ENCODE measurements at regions of chr9 and their contacts with region 1.

Region 1: DNA sequence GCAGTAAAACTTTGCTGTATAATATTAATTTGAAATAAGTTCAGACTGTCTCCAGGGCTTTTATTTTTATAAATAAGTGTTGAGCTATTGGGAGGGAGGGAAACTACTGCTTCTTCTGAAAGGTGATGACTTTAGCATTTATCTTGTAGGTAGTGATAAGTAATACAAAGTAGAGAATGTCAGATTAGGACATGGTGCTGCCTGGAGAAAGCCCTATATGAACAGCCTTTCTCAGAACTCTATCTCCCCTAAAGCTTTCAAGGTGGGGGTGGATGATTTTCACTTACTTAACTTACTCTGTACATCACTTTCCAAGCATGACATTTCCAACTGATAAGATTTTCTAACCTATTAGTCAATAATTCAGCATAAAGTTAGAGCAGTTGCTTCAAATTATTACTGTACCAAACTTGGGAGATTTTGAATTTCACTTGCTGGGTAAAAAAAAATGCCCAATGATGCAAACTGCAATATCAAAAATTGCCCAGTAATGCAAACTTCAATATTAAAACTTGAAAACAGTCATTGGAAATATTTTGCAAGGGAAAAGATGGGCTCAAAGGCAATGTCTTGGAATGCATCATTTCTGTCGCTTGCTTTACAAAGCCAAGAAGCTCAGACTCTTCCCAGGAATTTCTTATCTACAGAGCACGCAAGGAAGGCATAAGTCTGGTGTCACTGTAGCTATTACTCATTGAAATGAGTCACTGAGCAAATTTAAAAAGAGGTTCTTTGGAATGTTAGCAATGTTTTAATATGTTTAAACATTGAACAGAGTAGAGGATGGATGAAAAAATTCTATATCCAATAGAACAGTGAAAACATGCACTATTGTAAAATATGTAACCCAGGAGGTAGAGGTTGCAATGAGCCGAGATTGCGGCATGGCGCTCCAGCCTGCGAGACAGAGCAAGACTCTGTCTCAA is 569.5 kb downstream of the PSAT1 start:
- DNase-seq: peak; percentile 80
- H3K4me3 ChIP-seq: no peak overlapping the region
- H3K27ac ChIP-seq: peak overlapping the region; percentile 54
- H3K4me1 ChIP-seq: peaks cover 20% of the 10 kb centered on the region
- H3K27me3 ChIP-seq: no peaks in the 10 kb centered on the region
- CTCF ChIP-seq: no peak
- POLR2A ChIP-seq: no peak

Region 2: GRCh38 chr9:78786794-78787193 is 79.7 kb before region 1 on chr9:
- CTCF ChIA-PET with region 1: no interaction called
- POLR2A ChIA-PET with region 1: no interaction called
- dilution Hi-C with region 1: no loop called
- intact Hi-C with region 1: loop called (anchors 5 kb)
- DNase-seq: peak; percentile 57
- H3K4me3 ChIP-seq: no peak overlapping the region
- H3K27ac ChIP-seq: peak overlapping the region; percentile 30
- H3K4me1 ChIP-seq: peaks cover 11% of the 10 kb centered on the region
- H3K27me3 ChIP-seq: no peaks in the 10 kb centered on the region
- CTCF ChIP-seq: no peak
- POLR2A ChIP-seq: no peak

Region 3: DNA sequence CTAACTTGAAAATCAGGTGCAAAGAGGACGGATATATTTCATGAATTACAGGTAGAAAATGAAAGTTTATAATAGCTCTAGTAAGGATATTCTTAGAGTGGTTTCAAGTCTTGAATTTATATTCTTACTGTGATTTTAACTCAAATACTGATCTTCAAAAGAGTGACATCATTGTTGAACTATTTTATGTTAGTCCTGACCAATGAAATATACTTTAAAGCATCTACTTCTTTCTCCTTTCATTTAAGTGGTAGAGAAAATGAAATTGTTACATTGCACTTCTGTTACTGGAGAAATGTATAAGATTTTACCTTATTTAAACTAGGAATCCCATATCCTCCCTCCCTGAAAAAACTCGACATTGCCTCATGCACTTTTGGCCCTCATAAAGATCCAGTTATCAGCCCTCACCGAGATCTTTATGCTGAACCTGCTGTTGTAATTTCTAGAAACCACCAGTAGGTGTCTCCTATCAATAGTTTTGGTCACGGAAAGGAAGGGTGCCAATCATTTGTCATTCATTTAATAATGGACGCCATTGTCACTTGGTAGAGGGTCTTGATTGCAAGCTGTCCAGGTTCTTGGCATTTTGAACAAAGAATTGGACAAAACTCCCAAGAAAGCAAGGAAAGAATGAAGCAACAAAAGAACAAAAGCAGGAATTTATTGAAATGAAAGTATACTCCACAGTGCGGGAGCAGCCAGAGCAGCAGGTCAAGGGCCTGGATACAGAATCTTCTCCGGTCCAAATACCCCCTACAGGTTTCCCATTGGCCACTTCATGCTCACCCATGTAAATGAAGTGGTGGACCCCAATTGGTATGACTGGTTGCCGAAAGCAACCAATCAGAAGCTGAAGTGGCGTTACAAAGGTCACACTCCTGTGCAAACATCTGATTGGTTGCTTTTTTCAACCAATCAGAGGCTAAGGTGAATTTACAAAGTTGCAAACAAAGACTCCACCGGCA is 45.3 kb before region 1 on chr9:
- CTCF ChIA-PET with region 1: interaction called, 3 read pairs
- POLR2A ChIA-PET with region 1: no interaction called
- dilution Hi-C with region 1: no loop called
- intact Hi-C with region 1: loop called (anchors 2 kb)
- DNase-seq: peak; percentile 55
- H3K4me3 ChIP-seq: peak overlapping the region in 1 of 3 experiments; percentile 34
- H3K27ac ChIP-seq: peak overlapping the region; percentile 14
- H3K4me1 ChIP-seq: no peaks in the 10 kb centered on the region
- H3K27me3 ChIP-seq: no peaks in the 10 kb centered on the region
- CTCF ChIP-seq: peak; percentile 49 to 52
- POLR2A ChIP-seq: no peak

Region 4: DNA sequence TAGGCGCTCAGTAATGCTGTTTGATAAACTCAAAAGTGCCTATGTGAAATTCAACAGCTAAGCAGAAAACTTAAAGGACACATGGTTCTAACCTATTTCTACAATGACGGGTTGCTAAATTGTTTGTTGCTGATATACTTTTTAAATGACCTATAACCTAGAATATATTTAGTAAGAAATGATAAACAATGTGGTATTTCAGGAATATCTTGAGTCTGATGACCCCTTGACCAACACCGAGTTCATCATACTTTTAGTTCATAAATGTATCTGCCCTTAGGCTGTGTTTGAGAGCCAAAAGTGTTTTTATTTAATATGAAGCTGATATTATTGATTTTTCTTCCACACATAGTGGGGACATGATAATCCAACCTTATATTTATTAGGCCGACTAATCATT is 85.7 kb after region 1 on chr9:
- CTCF ChIA-PET with region 1: no interaction called
- POLR2A ChIA-PET with region 1: no interaction called
- dilution Hi-C with region 1: no loop called
- intact Hi-C with region 1: no loop called
- DNase-seq: no peak
- H3K4me3 ChIP-seq: no peak overlapping the region
- H3K27ac ChIP-seq: no peak overlapping the region
- H3K4me1 ChIP-seq: no peaks in the 10 kb centered on the region
- H3K27me3 ChIP-seq: no peaks in the 10 kb centered on the region
- CTCF ChIP-seq: no peak
- POLR2A ChIP-seq: no peak

Region 5: DNA sequence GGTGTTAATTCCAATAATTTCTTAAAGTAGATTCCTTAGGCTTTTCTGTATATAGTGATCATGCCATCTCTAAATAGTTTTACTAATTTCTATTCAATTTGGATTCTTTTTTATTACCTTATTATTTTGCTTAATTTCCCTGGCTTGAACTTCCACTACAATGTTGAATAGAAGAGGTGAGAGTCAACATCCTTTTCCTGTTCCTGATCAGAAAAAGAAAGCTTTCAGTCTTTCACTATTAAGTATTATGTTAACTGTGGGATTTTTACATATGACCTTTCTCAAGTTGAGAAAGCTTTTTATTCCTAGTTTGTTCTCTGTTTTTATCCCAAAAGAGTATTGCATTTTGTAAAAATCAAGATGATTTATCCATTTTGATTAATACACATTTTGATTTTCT is 130.8 kb after region 1 on chr9:
- CTCF ChIA-PET with region 1: interaction called, 3 read pairs
- POLR2A ChIA-PET with region 1: no interaction called
- dilution Hi-C with region 1: no loop called
- intact Hi-C with region 1: loop called (anchors 5 kb)
- DNase-seq: peak; percentile 85
- H3K4me3 ChIP-seq: peak overlapping the region in 1 of 3 experiments; percentile 23
- H3K27ac ChIP-seq: peak overlapping the region; percentile 63
- H3K4me1 ChIP-seq: peaks cover 19% of the 10 kb centered on the region
- H3K27me3 ChIP-seq: no peaks in the 10 kb centered on the region
- CTCF ChIP-seq: no peak
- POLR2A ChIP-seq: no peak

Measured in endothelial cell of umbilical vein (primary cell).